Breast epithelium (tissue), 4 donors: ENCODE measurements at regions of chr1 and their contacts with region 1.

Region 1: GRCh38 chr1:47710329-47711071 is 272.7 kb downstream of the FOXD2 start:
- DNase-seq: peak in 1 of 2 donors; percentile 66
- H3K4me3 ChIP-seq: peak overlapping the region in 2 of 3 donors; percentile 38 to 60
- H3K27ac ChIP-seq: no peak overlapping the region
- H3K4me1 ChIP-seq: peaks cover 0 to 12% of the 10 kb centered on the region in 2 donors
- H3K27me3 ChIP-seq: peaks cover 3 to 79% of the 10 kb centered on the region in 2 donors
- CTCF ChIP-seq: peak; percentile 70 to 89 (median 88)
- POLR2A ChIP-seq: no peak

Region 2: DNA sequence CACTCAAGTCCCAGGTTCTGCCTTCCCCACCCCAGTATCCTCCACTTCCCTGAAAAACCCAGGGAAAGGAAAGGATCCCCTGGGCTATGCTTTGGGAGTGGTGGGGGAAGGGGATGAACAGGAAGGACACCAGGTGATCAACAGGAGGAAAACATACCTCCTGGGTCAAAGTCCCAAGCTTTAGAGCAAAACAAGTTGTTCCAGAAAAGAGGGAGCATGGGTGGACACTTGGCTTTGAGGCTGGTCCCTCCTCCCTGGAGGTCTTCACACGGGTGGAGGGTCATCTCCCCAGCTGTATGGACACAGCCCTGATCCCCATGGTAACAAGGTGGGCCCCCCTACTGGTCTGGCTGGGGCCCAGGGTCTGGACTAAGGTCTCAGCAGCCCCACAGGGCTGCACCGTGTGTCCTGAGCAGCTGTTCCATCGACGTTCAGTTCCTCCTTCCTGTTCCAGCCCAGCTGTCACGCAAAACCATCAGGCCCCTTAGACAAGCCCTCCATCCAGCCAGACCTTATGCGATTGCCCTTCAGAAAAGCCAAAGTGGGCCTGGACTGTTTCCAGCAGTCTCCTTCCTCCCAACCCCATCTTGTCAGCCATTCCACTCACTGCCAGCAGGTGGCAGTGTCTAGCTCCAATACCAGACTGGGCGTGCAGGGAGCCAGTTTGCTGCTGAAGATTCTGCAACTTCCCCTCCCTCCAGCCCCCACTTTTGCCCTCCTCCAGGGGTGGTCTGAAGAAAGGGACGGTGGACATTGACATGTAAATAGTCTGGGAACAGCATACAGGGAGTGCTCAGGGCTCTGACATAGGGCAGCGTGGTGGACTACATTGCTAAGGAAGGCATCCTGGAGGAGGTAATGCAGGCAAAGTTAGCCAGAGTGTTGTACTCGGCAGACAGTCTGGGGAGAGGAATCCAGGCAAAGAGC is 517.8 kb before region 1 on chr1:
- intact Hi-C with region 1: loop called (anchors 10 kb)
- DNase-seq: peak; percentile 56 to 70
- H3K4me3 ChIP-seq: no peak overlapping the region
- H3K27ac ChIP-seq: peak overlapping the region in 1 of 2 donors; percentile 36
- H3K4me1 ChIP-seq: peaks cover 7% of the 10 kb centered on the region in 2 donors
- H3K27me3 ChIP-seq: no peaks in the 10 kb centered on the region
- CTCF ChIP-seq: peak; percentile 44 to 89 (median 79)
- POLR2A ChIP-seq: no peak

Region 3: DNA sequence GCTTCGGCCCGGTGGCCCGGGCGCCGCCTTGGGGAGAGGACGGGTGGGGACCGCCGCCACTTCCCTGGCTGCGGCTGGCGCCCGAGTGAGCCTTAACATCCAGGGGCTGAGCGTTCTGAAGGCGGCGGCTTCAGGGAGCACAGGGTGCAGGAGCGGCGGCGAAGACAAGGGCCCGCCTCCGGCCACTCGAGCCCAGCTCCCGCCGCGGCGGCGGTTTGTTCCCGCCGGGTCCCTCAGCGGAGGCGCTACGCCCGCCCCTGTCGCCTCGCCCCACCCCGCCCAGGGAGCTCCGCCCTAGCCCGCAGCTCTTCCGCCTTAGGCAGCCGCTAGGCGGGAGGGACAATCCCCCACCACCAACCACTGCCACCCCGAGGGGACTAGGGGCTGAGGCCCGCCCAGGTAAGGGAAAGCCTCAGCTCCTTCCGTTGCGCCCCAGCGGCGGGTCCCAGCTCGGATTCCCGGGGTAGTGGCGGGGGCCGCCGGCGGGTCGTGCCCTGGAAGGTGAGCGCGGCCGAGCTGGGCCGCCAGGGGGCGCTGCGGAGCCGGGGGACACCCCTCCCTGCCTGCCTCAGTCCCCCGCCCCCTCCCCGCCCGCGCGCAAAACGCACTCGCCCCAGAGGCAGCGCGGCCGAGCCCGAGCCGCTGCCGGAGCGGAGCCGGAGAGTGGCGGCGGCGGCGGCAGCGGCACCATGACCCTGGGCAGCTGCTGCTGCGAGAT is 272.9 kb before region 1 on chr1 and contains the start of gene FOXD2:
- intact Hi-C with region 1: loop called (anchors 5 kb)
- DNase-seq: peak; percentile 47 to 68
- H3K4me3 ChIP-seq: peak within 1 kb of the TSS; percentile 56 to 74 (median 60)
- H3K27ac ChIP-seq: peak within 1 kb of the TSS; percentile 70 to 82
- H3K4me1 ChIP-seq: peaks cover 6 to 16% of the 10 kb centered on the region in 2 donors
- H3K27me3 ChIP-seq: peaks cover 0 to 49% of the 10 kb centered on the region in 2 donors
- CTCF ChIP-seq: peak; percentile 86 to 97 (median 92)
- POLR2A ChIP-seq: no peak
- total RNA-seq, gene FOXD2: 0.32 to 0.33 TPM in 2 of 3 donors, not detected in the other

Region 4: DNA sequence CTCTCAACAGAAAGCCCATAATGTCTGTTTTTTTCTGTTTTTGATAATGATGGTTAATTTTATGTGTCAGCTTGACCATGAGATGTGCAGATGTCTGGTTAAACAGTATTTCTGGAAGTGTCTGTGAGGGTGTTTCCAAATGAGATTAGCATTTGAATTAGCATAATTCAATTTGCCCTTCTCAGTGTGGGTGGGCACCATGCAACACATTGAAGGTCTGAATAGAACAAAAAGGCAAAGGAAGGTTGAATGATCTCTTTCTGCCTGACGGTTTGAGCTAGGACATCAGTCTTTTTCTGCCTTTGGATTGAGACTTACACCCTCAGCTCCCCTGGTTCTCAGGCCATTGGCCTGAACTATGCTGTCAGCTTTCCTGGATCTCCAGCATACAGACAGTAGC is 796.4 kb after region 1 on chr1:
- intact Hi-C with region 1: loop called (anchors 5 kb)
- DNase-seq: no peak
- H3K4me3 ChIP-seq: no peak overlapping the region
- H3K27ac ChIP-seq: no peak overlapping the region
- H3K4me1 ChIP-seq: no peaks in the 10 kb centered on the region
- H3K27me3 ChIP-seq: no peaks in the 10 kb centered on the region
- CTCF ChIP-seq: no peak
- POLR2A ChIP-seq: no peak